CD8-positive, alpha-beta T cell (primary cell): ENCODE measurements at regions of chr2 and their contacts with region 1.

Region 1: DNA sequence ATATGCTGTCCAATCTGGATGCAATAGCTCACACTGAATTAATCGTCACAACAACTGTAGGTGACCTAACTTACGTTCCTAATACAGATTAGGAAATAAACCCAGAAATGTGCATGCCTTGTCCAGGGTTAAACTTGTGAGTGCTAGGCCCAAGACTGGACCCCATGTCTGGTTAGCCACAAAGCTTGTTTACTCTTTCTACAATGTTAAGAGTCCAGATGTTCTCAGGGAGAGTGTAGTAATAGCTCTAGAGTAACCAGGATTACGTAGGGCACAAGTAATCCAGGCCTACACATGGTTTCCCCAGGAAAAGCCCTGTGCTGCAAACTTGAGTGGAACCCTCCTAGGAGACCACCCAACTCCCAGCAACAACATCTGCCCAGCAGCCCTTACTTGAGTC is 26.2 kb downstream of the TRIB2 start:
- DNase-seq: no peak
- ATAC-seq: no peak
- H3K4me3 ChIP-seq: no peak overlapping the region
- H3K4me3 Mint-ChIP-seq: no peak overlapping the region
- H3K27ac ChIP-seq: no peak overlapping the region
- H3K27ac Mint-ChIP-seq: no peak overlapping the region
- H3K4me1 ChIP-seq: no peaks in the 10 kb centered on the region
- H3K4me1 Mint-ChIP-seq: peaks cover 6% of the 10 kb centered on the region
- H3K27me3 ChIP-seq: no peaks in the 10 kb centered on the region
- H3K27me3 Mint-ChIP-seq: no peaks in the 10 kb centered on the region
- CTCF ChIP-seq: no peak

Region 2: GRCh38 chr2:12819103-12819475 is 76.2 kb after region 1 on chr2:
- CTCF ChIA-PET with region 1: no interaction called
- POLR2A ChIA-PET with region 1: no interaction called
- intact Hi-C with region 1: loop called in 1 of 2 experiments (anchors 10 kb)
- DNase-seq: no peak
- ATAC-seq: no peak
- H3K4me3 ChIP-seq: no peak overlapping the region
- H3K4me3 Mint-ChIP-seq: no peak overlapping the region
- H3K27ac ChIP-seq: no peak overlapping the region
- H3K27ac Mint-ChIP-seq: no peak overlapping the region
- H3K4me1 ChIP-seq: peaks cover 22% of the 10 kb centered on the region
- H3K4me1 Mint-ChIP-seq: peaks cover 34% of the 10 kb centered on the region
- H3K27me3 ChIP-seq: no peaks in the 10 kb centered on the region
- H3K27me3 Mint-ChIP-seq: peaks cover 6% of the 10 kb centered on the region
- CTCF ChIP-seq: no peak